ENCODE measurements at regions of chr3 and their contacts with region 1.

Region 1: GRCh38 chr3:39707314-39707909 is 102.0 kb upstream of the MYRIP start:
- DNase-seq: no peak
- ATAC-seq: peak; percentile 73
- H3K4me3 ChIP-seq: no peak overlapping the region
- H3K27ac ChIP-seq: no peak overlapping the region
- H3K4me1 ChIP-seq: no peaks in the 10 kb centered on the region
- H3K27me3 ChIP-seq: no peaks in the 10 kb centered on the region
- CTCF ChIP-seq: peak; percentile 56 to 59 (median 57)
- EP300 ChIP-seq: no peak
- POLR2A ChIP-seq: no peak
- RAD21 ChIP-seq: peak; percentile 53

Region 2: DNA sequence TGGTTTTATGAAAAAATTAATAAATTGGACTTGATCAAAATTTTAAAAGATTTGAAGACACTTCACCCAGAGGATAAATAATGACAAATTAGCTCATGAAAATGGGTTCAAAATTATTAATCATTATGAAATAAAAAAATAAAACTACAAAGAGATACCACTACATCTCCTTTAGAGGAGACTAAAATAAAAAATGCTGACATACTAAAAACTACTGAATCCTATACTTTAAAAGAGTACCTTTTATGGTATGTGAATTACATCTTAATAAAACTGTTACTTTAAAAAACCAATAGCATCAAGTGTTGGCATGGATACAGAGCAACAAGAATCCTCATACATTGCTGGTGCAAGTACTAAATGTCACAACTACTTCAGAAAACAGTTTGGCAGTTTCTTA is 56.0 kb after region 1 on chr3:
- CTCF ChIA-PET with region 1: no interaction called
- POLR2A ChIA-PET with region 1: no interaction called
- RAD21 ChIA-PET with region 1: no interaction called
- SMC1A ChIA-PET with region 1: no interaction called
- in situ Hi-C with region 1: no loop called
- intact Hi-C with region 1: no loop called
- DNase-seq: no peak
- ATAC-seq: no peak
- H3K4me3 ChIP-seq: no peak overlapping the region
- H3K27ac ChIP-seq: no peak overlapping the region
- H3K4me1 ChIP-seq: no peaks in the 10 kb centered on the region
- H3K27me3 ChIP-seq: no peaks in the 10 kb centered on the region
- CTCF ChIP-seq: no peak
- EP300 ChIP-seq: no peak
- POLR2A ChIP-seq: no peak
- RAD21 ChIP-seq: no peak

Region 3: DNA sequence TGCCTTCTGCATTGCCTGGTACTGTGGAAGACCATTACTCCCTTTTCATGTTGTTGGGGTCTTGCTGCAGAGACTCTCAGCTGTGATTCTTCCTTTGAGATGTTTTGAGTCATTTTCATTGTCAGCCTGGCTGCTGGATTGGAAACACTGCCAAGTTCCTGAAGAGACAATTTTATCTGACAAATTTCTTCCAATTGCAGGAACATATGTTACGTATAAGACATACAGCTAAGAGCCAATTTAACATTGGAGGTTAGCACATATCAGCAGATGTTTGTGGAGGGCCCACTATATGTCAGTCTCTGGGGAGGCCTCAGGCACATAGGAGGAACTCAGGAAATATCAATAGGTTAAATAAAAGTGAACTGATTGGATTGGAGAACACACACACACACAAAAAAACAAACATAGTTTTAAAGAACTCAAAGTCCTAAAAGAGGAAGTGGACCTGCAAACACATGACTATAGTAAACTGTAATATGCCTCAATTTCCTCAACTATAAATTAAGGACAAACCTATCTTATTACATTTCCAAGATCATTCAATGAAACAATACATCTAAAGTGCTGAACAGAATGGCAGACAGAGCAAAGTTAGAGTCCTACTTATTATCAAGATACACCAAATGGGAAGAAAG is 274.3 kb after region 1 on chr3:
- CTCF ChIA-PET with region 1: no interaction called
- POLR2A ChIA-PET with region 1: no interaction called
- RAD21 ChIA-PET with region 1: no interaction called
- SMC1A ChIA-PET with region 1: no interaction called
- in situ Hi-C with region 1: loop called (anchors 10 kb)
- intact Hi-C with region 1: no loop called
- DNase-seq: no peak
- ATAC-seq: no peak
- H3K4me3 ChIP-seq: no peak overlapping the region
- H3K27ac ChIP-seq: no peak overlapping the region
- H3K4me1 ChIP-seq: no peaks in the 10 kb centered on the region
- H3K27me3 ChIP-seq: no peaks in the 10 kb centered on the region
- CTCF ChIP-seq: no peak
- EP300 ChIP-seq: no peak
- POLR2A ChIP-seq: no peak
- RAD21 ChIP-seq: no peak

Region 4: GRCh38 chr3:40317061-40317855 is 609.8 kb after region 1 on chr3:
- CTCF ChIA-PET with region 1: interaction called, 4 read pairs
- POLR2A ChIA-PET with region 1: no interaction called
- RAD21 ChIA-PET with region 1: no interaction called
- SMC1A ChIA-PET with region 1: no interaction called
- in situ Hi-C with region 1: loop called (anchors 10 kb)
- intact Hi-C with region 1: loop called (anchors 5 kb)
- DNase-seq: no peak
- ATAC-seq: peak; percentile 90
- H3K4me3 ChIP-seq: no peak overlapping the region
- H3K27ac ChIP-seq: no peak overlapping the region
- H3K4me1 ChIP-seq: no peaks in the 10 kb centered on the region
- H3K27me3 ChIP-seq: no peaks in the 10 kb centered on the region
- CTCF ChIP-seq: peak; percentile 73 to 79 (median 77)
- EP300 ChIP-seq: no peak
- POLR2A ChIP-seq: no peak
- RAD21 ChIP-seq: peak; percentile 83